ENCODE measurements at regions of chr1 and their contacts with region 1.

Region 1: DNA sequence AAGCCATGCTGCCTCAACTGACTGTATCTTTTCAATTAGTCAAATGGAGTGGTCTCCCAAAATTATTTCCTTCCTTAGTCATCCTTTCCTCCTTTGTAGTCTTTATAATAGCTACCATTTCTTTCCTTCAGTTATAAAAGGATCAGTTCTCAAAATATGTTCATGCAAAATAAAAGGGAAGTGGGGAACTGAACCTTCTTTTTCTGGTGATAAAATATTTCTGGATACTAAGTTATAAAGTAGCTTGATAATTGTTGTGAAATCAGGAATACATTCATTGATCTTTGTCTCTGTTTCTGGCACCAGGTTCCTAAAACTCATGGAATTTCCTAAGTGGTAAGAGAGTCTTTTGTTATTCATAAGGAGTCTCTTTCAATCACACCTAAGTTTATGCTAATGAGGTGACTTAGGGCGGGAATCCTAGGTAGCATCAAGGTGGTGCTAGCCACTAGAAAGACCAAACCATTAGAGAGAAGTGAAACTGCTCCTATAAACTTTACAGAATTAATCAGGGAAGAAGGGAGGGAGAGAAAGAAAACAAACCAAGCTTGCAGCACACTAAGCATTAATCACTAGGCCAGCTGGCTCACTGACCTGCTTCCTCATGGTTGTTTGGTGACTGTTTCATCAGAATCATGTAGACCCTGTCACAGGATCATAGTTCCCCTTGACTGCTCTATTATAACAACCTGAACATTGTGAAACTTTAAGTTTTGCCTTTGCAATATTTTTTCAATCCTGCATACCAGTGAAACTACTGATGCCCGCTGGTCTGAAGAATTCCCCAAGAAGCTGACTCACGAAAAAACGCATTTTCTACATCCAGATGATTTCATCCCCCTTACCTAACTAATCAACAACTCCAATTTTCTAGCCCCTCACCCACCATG is 161.6 kb upstream of the PTBP2 start:
- DNase-seq: peak; percentile 61
- H3K4me3 Mint-ChIP-seq: peak overlapping the region; percentile 22
- H3K27ac Mint-ChIP-seq: peak overlapping the region; percentile 80
- H3K4me1 Mint-ChIP-seq: peaks cover 17% of the 10 kb centered on the region
- H3K27me3 Mint-ChIP-seq: no peaks in the 10 kb centered on the region
- CTCF ChIP-seq: no peak

Region 2: GRCh38 chr1:96520579-96520947 is 39.4 kb before region 1 on chr1:
- CTCF ChIA-PET with region 1: no interaction called
- intact Hi-C with region 1: loop called (anchors 1 kb)
- DNase-seq: no peak
- H3K4me3 Mint-ChIP-seq: no peak overlapping the region
- H3K27ac Mint-ChIP-seq: no peak overlapping the region
- H3K4me1 Mint-ChIP-seq: peaks cover 35% of the 10 kb centered on the region
- H3K27me3 Mint-ChIP-seq: no peaks in the 10 kb centered on the region
- CTCF ChIP-seq: no peak

Measured in Calu3 (cell line).